Activated CD8-positive, alpha-beta T cell treated with anti-CD3 and anti-CD28 coated beads for 36 hours (primary cell): ENCODE measurements at regions of chr9 and their contacts with region 1.

Region 1: DNA sequence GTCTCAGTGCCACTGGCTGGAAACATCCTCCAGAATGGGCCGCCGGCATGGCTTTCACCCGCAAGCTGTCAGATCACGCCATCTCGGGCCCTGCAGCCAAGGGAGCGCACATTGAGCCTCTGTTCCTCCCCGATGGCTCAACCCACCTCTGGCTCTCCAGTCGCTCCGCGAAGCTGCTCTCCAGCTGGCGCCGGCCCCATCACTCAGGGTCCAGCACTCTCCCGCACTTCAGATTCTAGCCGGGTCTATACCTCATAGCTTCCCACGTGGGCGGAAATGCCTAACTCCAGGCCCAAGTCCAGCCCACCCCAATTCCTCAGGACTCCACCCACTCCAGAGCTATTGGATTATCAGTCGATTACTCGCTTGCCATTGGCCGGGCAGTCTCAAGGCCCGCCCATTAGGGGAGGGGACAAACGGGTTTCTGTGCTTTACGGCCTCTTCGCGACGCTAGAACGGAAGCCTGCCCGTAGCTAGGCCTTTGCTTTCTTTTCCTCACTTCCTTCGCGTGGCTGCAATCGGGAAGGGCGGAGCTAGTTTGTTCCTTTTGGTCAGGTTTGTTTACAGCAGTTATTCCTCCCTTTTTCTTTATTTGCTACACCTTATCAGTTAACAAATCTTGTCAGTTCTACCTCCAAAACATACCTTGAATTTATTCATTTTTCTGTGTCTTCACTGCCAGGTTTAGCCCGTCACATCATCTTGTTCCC is at the start of gene NOL6:
- DNase-seq: peak; percentile 99
- ATAC-seq: peak; percentile 100
- H3K4me3 Mint-ChIP-seq: peak within 1 kb of the TSS; percentile 89
- H3K27ac Mint-ChIP-seq: peak within 1 kb of the TSS; percentile 94
- H3K4me1 Mint-ChIP-seq: peaks cover 23% of the 10 kb centered on the region
- H3K27me3 Mint-ChIP-seq: no peaks in the 10 kb centered on the region
- CTCF ChIP-seq: no peak
- total RNA-seq, gene NOL6: 45.5 to 45.9 TPM

Region 2: DNA sequence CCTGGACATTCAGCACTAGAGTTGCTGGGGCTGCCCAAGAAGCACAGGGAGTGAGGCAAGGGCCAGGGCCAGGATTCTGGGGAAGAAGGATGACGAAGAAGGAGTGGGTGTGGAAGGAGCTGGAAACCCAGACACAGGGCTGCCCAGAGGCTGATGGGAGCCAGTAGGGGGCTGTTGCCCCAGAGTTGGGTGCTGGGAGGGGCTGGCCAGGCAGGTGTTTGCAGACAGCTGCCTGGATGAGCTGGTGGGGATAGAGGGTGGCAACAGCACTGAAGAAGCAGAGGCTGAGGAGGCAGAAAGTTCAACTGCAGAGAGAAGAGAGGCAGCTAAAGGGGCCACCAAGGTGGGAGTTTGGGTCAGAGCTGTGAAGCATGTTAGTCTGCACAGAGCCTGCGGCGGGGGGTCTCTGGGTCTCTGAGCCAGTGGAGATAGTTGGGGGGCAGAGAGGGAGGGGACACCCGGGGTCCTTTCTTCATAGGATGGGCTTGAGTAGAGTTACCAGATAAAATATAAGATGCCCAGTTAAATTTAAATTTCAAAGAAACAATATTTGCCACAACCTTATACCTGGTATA is 68.9 kb before region 1 on chr9:
- CTCF ChIA-PET with region 1: interaction called, 81 read pairs
- POLR2A ChIA-PET with region 1: no interaction called
- intact Hi-C with region 1: loop called (anchors 5 kb)
- DNase-seq: no peak
- ATAC-seq: no peak
- H3K4me3 Mint-ChIP-seq: no peak overlapping the region
- H3K27ac Mint-ChIP-seq: no peak overlapping the region
- H3K4me1 Mint-ChIP-seq: no peaks in the 10 kb centered on the region
- H3K27me3 Mint-ChIP-seq: no peaks in the 10 kb centered on the region
- CTCF ChIP-seq: no peak

Region 3: DNA sequence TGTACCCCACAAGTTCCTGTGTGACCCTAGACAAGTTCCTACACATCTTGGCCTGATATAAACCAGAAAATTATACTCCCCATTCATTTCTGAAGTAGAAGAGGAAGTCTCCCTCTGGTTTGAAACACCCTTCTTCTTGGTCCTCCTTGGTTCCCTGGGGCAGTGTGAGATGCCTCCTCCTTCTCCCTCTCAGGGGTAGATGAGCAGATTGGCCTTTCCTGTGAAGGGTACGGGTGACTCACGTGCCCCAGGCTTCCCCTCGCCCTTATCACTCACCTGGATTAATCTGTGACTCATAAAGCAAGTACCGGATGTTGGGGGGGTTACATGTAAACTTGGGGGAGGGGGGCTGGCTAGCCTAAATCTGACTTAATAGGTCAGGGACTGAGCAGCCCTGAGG is 15.4 kb before region 1 on chr9:
- CTCF ChIA-PET with region 1: interaction called, 65 read pairs
- POLR2A ChIA-PET with region 1: interaction called, 52 read pairs
- intact Hi-C with region 1: no loop called
- DNase-seq: peak; percentile 85
- ATAC-seq: peak; percentile 87
- H3K4me3 Mint-ChIP-seq: peak overlapping the region; percentile 8
- H3K27ac Mint-ChIP-seq: peak overlapping the region; percentile 90
- H3K4me1 Mint-ChIP-seq: peaks cover 53% of the 10 kb centered on the region
- H3K27me3 Mint-ChIP-seq: no peaks in the 10 kb centered on the region
- CTCF ChIP-seq: no peak